PC-9 (cell line): ENCODE measurements at regions of chr7 and their contacts with region 1.

Region 1: GRCh38 chr7:139023076-139023475 is 12.8 kb downstream of the ZC3HAV1L start:
- DNase-seq: no peak
- H3K4me3 ChIP-seq: no peak overlapping the region
- H3K27ac ChIP-seq: no peak overlapping the region
- H3K4me1 ChIP-seq: no peaks in the 10 kb centered on the region
- H3K27me3 ChIP-seq: no peaks in the 10 kb centered on the region
- CTCF ChIP-seq: no peak

Region 2: GRCh38 chr7:138981332-138982203 is 41.5 kb before region 1 on chr7 and contains the start of gene KIAA1549:
- CTCF ChIA-PET with region 1: no interaction called
- POLR2A ChIA-PET with region 1: no interaction called
- intact Hi-C with region 1: loop called (anchors 1 kb)
- DNase-seq: peak in 1 of 2 experiments; percentile 78
- H3K4me3 ChIP-seq: peak within 1 kb of the TSS; percentile 73
- H3K27ac ChIP-seq: no peak within 1 kb of the TSS
- H3K4me1 ChIP-seq: peaks cover 34% of the 10 kb centered on the region
- H3K27me3 ChIP-seq: no peaks in the 10 kb centered on the region
- CTCF ChIP-seq: no peak
- total RNA-seq, gene KIAA1549: 20.2 and 26.6 TPM in 2 replicates

Region 3: DNA sequence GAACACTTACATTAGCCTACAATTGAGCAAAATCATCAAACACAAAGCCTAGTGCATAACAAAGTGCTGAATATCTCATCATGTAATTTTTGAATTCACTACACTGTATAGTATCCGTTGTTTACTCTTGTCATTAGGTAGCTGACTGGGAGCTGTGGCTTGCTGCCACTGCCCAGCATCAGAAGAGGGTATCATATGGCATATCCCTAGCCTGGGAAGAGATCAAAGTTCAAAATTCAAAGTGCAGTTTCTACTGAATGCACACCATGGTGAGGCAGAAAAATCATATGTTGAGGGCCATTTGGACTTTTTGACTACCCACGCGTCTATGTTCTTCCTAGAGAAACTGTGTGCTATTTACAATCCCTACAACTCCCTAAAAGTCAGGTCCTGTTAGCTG is 93.9 kb after region 1 on chr7:
- CTCF ChIA-PET with region 1: interaction called, 21 read pairs
- POLR2A ChIA-PET with region 1: no interaction called
- intact Hi-C with region 1: no loop called
- DNase-seq: no peak
- H3K4me3 ChIP-seq: no peak overlapping the region
- H3K27ac ChIP-seq: no peak overlapping the region
- H3K4me1 ChIP-seq: peaks cover 27% of the 10 kb centered on the region
- H3K27me3 ChIP-seq: no peaks in the 10 kb centered on the region
- CTCF ChIP-seq: no peak